PC-3 (cell line): ENCODE measurements at regions of chr7 and their contacts with region 1.

Region 1: DNA sequence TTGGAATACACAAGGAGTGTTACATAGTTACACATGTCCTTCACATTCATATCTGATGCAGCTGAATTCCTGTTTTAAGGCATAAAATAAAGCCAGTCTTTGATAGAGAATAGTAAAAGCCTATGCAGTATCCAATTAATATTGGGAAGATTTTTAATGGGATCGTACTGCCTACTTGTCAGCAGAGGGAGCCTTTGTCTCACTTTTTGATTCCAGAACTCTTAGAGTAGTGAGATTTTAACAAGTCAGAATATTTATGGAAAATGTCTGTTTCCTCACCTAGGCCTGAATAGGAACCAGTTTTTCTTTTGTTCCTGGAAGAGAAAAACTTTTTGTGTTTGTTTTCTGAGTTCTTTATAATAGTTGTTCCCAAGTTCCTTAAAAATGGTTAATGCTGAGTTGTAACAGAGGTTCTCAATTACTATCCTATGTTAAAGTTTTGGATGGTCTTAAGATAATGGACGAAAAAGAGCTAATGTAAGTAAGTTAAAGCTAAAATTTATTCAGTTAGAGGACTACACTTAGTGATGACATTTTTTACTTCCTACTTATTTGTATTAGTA is 114.0 kb downstream of the BBS9 start:
- DNase-seq: peak; percentile 63
- ATAC-seq: peak; percentile 88
- H3K4me3 ChIP-seq: no peak overlapping the region
- H3K27ac ChIP-seq: no peak overlapping the region
- H3K4me1 ChIP-seq: no peaks in the 10 kb centered on the region
- H3K27me3 ChIP-seq: no peaks in the 10 kb centered on the region
- CTCF ChIP-seq: peak; percentile 80

Region 2: GRCh38 chr7:33334349-33334748 is 90.9 kb after region 1 on chr7:
- CTCF ChIA-PET with region 1: no interaction called
- POLR2A ChIA-PET with region 1: no interaction called
- intact Hi-C with region 1: loop called (anchors 5 kb)
- DNase-seq: peak; percentile 58
- ATAC-seq: peak; percentile 74
- H3K4me3 ChIP-seq: no peak overlapping the region
- H3K27ac ChIP-seq: no peak overlapping the region
- H3K4me1 ChIP-seq: no peaks in the 10 kb centered on the region
- H3K27me3 ChIP-seq: no peaks in the 10 kb centered on the region
- CTCF ChIP-seq: peak; percentile 75

Region 3: GRCh38 chr7:33757562-33758165 is 514.3 kb after region 1 on chr7:
- CTCF ChIA-PET with region 1: no interaction called
- POLR2A ChIA-PET with region 1: no interaction called
- intact Hi-C with region 1: loop called (anchors 1 kb)
- DNase-seq: peak; percentile 72
- ATAC-seq: peak; percentile 49; the same call in 1 of the 2 replicates
- H3K4me3 ChIP-seq: no peak overlapping the region
- H3K27ac ChIP-seq: no peak overlapping the region
- H3K4me1 ChIP-seq: no peaks in the 10 kb centered on the region; the same call in 1 of the 2 replicates
- H3K27me3 ChIP-seq: no peaks in the 10 kb centered on the region
- CTCF ChIP-seq: peak; percentile 66

Region 4: GRCh38 chr7:33904681-33905388 is 661.4 kb after region 1 on chr7:
- CTCF ChIA-PET with region 1: no interaction called
- POLR2A ChIA-PET with region 1: no interaction called
- intact Hi-C with region 1: loop called (anchors 10 kb)
- DNase-seq: no peak
- ATAC-seq: no peak
- H3K4me3 ChIP-seq: no peak overlapping the region
- H3K27ac ChIP-seq: no peak overlapping the region
- H3K4me1 ChIP-seq: peaks cover 12% of the 10 kb centered on the region; the same call in 1 of the 2 replicates
- H3K27me3 ChIP-seq: peaks cover 56% of the 10 kb centered on the region
- CTCF ChIP-seq: no peak

Region 5: GRCh38 chr7:33932832-33933468 is 689.5 kb after region 1 on chr7:
- CTCF ChIA-PET with region 1: interaction called, 3 read pairs
- POLR2A ChIA-PET with region 1: no interaction called
- intact Hi-C with region 1: loop called (anchors 1 kb)
- DNase-seq: peak; percentile 89
- ATAC-seq: peak; percentile 84
- H3K4me3 ChIP-seq: peak overlapping the region; percentile 48
- H3K27ac ChIP-seq: peak overlapping the region; percentile 51
- H3K4me1 ChIP-seq: peaks cover 21% of the 10 kb centered on the region
- H3K27me3 ChIP-seq: 0 out of 2 replicates have a peak, but pooled peaks cover 3% of the 10 kb centered on the region
- CTCF ChIP-seq: peak; percentile 90